ENCODE measurements at regions of chr7 and their contacts with region 1.

Region 1: DNA sequence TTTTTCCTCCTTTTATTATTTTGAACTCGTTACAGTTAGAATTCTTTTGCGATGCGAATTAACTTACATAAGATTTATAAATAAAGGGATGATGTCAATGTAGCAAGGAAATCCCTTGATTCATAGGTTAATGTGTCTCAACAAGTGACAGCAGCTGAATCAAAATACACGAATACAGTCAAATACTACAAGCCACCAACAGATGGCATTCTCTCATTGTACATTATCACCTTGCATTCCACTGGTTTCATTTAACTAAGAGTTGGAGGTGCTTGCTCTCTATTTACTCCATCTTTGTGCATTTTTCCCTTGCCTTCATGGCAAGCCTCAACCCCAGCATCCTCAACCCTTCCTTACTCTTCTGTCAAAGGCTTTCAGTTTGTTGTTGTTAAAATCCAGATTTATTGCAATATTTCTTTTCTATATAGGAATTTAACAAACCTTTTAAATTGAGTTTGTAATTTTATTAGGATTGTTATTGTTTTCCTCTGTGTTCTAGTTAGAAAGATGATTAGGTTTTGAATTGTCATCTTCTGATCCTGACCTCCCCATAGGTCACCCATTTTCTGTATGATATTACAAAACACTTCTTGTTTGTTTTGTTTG is 78.3 kb downstream of the SLC25A40 start:
- DNase-seq: peak; percentile 66
- H3K4me3 ChIP-seq: no peak overlapping the region
- H3K27ac ChIP-seq: no peak overlapping the region
- H3K4me1 ChIP-seq: no peaks in the 10 kb centered on the region
- CTCF ChIP-seq: peak; percentile 84

Region 2: GRCh38 chr7:87506246-87507180 is 291.4 kb before region 1 on chr7:
- CTCF ChIA-PET with region 1: no interaction called
- POLR2A ChIA-PET with region 1: no interaction called
- intact Hi-C with region 1: loop called (anchors 5 kb)
- DNase-seq: no peak
- H3K4me3 ChIP-seq: no peak overlapping the region
- H3K27ac ChIP-seq: no peak overlapping the region
- H3K4me1 ChIP-seq: no peaks in the 10 kb centered on the region
- CTCF ChIP-seq: peak; percentile 67

Region 3: GRCh38 chr7:87735371-87735770 is 62.5 kb before region 1 on chr7:
- CTCF ChIA-PET with region 1: no interaction called
- POLR2A ChIA-PET with region 1: no interaction called
- intact Hi-C with region 1: no loop called
- DNase-seq: no peak
- H3K4me3 ChIP-seq: no peak overlapping the region
- H3K27ac ChIP-seq: no peak overlapping the region
- H3K4me1 ChIP-seq: no peaks in the 10 kb centered on the region
- CTCF ChIP-seq: no peak

Region 4: GRCh38 chr7:87886875-87887274 is 89.0 kb after region 1 on chr7:
- CTCF ChIA-PET with region 1: no interaction called
- POLR2A ChIA-PET with region 1: no interaction called
- intact Hi-C with region 1: loop called (anchors 1 kb)
- DNase-seq: peak; percentile 42
- H3K4me3 ChIP-seq: no peak overlapping the region
- H3K27ac ChIP-seq: no peak overlapping the region
- H3K4me1 ChIP-seq: peaks cover 7% of the 10 kb centered on the region
- CTCF ChIP-seq: peak; percentile 82

Region 5: DNA sequence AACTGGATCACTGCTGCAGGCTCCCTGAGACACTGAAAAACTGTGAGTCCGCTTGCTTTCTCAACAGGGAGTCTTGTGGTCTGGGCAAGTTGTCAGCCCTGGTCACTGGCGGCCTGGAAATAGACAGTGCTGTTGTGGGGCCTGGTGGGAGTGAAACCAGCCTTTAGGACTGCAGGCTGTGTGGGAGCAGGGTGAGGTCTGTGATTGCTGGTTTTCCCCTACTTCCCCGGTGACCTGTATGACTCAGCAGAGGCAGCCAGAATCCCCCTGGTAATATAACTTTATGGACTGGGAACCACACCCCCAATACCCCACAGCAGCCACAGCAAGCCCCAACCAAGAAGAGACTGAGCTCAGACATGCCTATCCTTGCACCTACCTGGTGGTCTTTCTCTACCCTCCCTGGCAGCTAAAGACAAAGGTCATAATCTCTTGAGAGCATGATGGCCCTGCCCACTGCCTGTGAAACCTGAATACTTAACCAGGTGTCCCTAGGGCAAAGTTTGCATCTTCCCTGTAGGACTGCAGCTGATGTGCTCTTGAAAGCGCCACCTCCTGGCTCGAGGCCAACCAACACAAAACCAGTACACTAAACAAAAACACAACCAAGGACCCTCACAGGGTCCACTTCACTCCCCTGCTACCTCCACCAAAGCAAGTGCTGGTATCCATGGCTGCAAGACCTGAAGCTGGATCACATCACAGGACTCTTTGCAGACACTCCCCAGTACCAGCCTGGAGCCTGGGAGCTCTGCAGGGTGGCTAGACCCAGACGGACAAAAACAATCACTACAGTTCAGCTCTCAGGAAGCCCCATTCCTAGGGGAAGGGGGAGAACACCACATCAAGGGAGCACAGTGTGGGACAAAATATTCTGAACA is 128.9 kb after region 1 on chr7:
- CTCF ChIA-PET with region 1: no interaction called
- POLR2A ChIA-PET with region 1: no interaction called
- intact Hi-C with region 1: loop called (anchors 5 kb)
- DNase-seq: peak; percentile 56
- H3K4me3 ChIP-seq: no peak overlapping the region
- H3K27ac ChIP-seq: no peak overlapping the region
- H3K4me1 ChIP-seq: peaks cover 8% of the 10 kb centered on the region
- CTCF ChIP-seq: peak; percentile 74

Region 6: DNA sequence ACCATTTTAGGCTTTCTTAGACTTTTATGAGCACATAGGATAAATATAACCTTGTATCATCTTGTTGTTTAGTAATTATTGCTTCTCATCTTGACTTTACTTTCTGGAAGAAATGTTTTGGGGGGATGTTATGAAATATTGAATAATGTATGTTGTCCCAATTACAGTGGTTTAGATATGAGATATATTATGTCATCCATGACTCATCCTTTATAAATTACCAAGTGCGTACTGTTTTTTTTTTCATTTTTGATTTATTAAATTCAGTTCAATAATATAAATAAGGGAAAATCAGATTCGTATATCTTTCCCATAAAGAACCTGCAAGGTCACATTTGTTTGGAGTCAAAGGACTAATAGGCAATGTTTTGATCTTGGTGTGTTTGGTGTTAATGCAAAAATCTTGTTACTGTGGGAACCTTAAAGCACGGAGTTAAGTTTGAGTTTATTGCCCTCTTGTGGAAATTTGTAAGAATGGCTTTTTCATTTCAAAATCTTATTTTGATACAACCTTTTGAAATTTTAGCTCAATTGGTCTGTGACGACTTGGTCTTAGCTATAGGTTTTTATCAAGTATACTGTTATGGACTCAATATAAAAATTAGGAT is 313.3 kb after region 1 on chr7:
- CTCF ChIA-PET with region 1: no interaction called
- POLR2A ChIA-PET with region 1: no interaction called
- intact Hi-C with region 1: loop called (anchors 1 kb)
- DNase-seq: peak; percentile 49
- H3K4me3 ChIP-seq: no peak overlapping the region
- H3K27ac ChIP-seq: no peak overlapping the region
- H3K4me1 ChIP-seq: no peaks in the 10 kb centered on the region
- CTCF ChIP-seq: peak; percentile 83